ENCODE measurements at regions of chr7 and their contacts with region 1.

Region 1: GRCh38 chr7:142992464-142992863 is 30.3 kb upstream of the KEL start:
- DNase-seq: no peak
- ATAC-seq: no peak
- H3K4me3 Mint-ChIP-seq: no peak overlapping the region
- H3K27ac Mint-ChIP-seq: no peak overlapping the region
- H3K4me1 Mint-ChIP-seq: no peaks in the 10 kb centered on the region
- H3K27me3 Mint-ChIP-seq: peaks cover 10% of the 10 kb centered on the region

Region 2: GRCh38 chr7:142438235-142438922 is 554.1 kb before region 1 on chr7:
- CTCF ChIA-PET with region 1: no interaction called
- POLR2A ChIA-PET with region 1: no interaction called
- intact Hi-C with region 1: loop called in 1 of 2 experiments (anchors 5 kb)
- DNase-seq: peak; percentile 59
- ATAC-seq: peak; percentile 49
- H3K4me3 Mint-ChIP-seq: no peak overlapping the region
- H3K27ac Mint-ChIP-seq: no peak overlapping the region
- H3K4me1 Mint-ChIP-seq: peaks cover 57% of the 10 kb centered on the region
- H3K27me3 Mint-ChIP-seq: no peaks in the 10 kb centered on the region